Tibial artery (tissue), 4 donors: ENCODE measurements at regions of chr15 and their contacts with region 1.

Region 1: GRCh38 chr15:94033683-94034020 is 197.7 kb upstream of the MCTP2 start:
- DNase-seq: no peak
- H3K4me3 ChIP-seq: no peak overlapping the region
- H3K27ac ChIP-seq: no peak overlapping the region
- H3K4me1 ChIP-seq: no peaks in the 10 kb centered on the region
- H3K27me3 ChIP-seq: no peaks in the 10 kb centered on the region
- CTCF ChIP-seq: no peak

Region 2: GRCh38 chr15:94080418-94080817 is 46.8 kb after region 1 on chr15:
- intact Hi-C with region 1: loop called (anchors 2 kb)
- DNase-seq: peak in 1 of 2 donors; percentile 53
- H3K4me3 ChIP-seq: no peak overlapping the region
- H3K27ac ChIP-seq: no peak overlapping the region
- H3K4me1 ChIP-seq: no peaks in the 10 kb centered on the region
- H3K27me3 ChIP-seq: no peaks in the 10 kb centered on the region
- CTCF ChIP-seq: no peak

Region 3: GRCh38 chr15:94287794-94288246 is 254.2 kb after region 1 on chr15:
- intact Hi-C with region 1: no loop called
- DNase-seq: no peak
- H3K4me3 ChIP-seq: no peak overlapping the region
- H3K27ac ChIP-seq: no peak overlapping the region
- H3K4me1 ChIP-seq: no peaks in the 10 kb centered on the region
- H3K27me3 ChIP-seq: no peaks in the 10 kb centered on the region
- CTCF ChIP-seq: no peak